SK-N-SH (cell line): ENCODE measurements at regions of chr4 and their contacts with region 1.

Region 1: GRCh38 chr4:108018040-108018883 is 28.6 kb downstream of the HADH start:
- DNase-seq: peak; percentile 72
- H3K4me3 ChIP-seq: no peak overlapping the region; a peak in 1 of 4 replicates
- H3K27ac ChIP-seq: no peak overlapping the region
- H3K4me1 ChIP-seq: no peaks in the 10 kb centered on the region
- H3K27me3 ChIP-seq: no peaks in the 10 kb centered on the region
- CTCF ChIP-seq: peak; percentile 94
- EP300 ChIP-seq: no peak
- RAD21 ChIP-seq: peak; percentile 88

Region 2: GRCh38 chr4:107993969-107994368 is 24.3 kb before region 1 on chr4:
- CTCF ChIA-PET with region 1: interaction called, 20 read pairs
- POLR2A ChIA-PET with region 1: no interaction called
- DNase-seq: no peak
- H3K4me3 ChIP-seq: no peak overlapping the region
- H3K27ac ChIP-seq: no peak overlapping the region
- H3K4me1 ChIP-seq: peaks cover 3 to 4% of the 10 kb centered on the region in 2 experiments; a peak in 3 of 4 replicates
- H3K27me3 ChIP-seq: no peaks in the 10 kb centered on the region
- CTCF ChIP-seq: no peak
- EP300 ChIP-seq: no peak
- RAD21 ChIP-seq: no peak

Region 3: DNA sequence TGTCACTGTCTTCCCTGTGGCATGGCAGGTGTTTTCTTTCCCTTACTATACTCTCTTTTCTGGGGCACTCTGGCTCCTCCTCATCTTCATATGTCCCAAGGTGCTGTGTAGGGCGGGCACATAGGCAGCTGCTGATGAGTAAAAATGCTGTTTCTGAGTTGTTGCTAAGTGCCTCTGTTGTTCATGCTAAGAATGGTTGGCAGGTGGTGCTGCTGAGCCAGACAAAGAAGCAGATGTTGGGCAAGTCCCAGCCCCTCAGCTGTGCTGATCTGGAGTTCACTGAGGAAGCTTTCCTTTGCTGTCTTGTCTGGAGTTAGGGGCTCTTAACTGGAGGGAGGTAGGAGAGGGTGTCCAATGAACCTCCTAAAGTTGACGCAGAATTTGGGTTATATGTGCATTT is 12.1 kb after region 1 on chr4:
- CTCF ChIA-PET with region 1: interaction called, 89 read pairs
- POLR2A ChIA-PET with region 1: no interaction called
- DNase-seq: peak; percentile 40
- H3K4me3 ChIP-seq: no peak overlapping the region
- H3K27ac ChIP-seq: no peak overlapping the region
- H3K4me1 ChIP-seq: peaks cover 0 to 6% of the 10 kb centered on the region in 2 experiments; a peak in 1 of 4 replicates
- H3K27me3 ChIP-seq: no peaks in the 10 kb centered on the region
- CTCF ChIP-seq: peak; percentile 41
- EP300 ChIP-seq: no peak
- RAD21 ChIP-seq: peak; percentile 81

Region 4: GRCh38 chr4:108054025-108054638 is 35.9 kb after region 1 on chr4:
- CTCF ChIA-PET with region 1: interaction called, 30 read pairs
- POLR2A ChIA-PET with region 1: no interaction called
- DNase-seq: no peak
- H3K4me3 ChIP-seq: no peak overlapping the region
- H3K27ac ChIP-seq: no peak overlapping the region
- H3K4me1 ChIP-seq: no peaks in the 10 kb centered on the region; a peak in 1 of 4 replicates
- H3K27me3 ChIP-seq: peaks cover 66% of the 10 kb centered on the region
- CTCF ChIP-seq: no peak
- EP300 ChIP-seq: no peak
- RAD21 ChIP-seq: no peak

Region 5: GRCh38 chr4:108492816-108493595 is 474.7 kb after region 1 on chr4:
- CTCF ChIA-PET with region 1: interaction called, 14 read pairs
- POLR2A ChIA-PET with region 1: no interaction called
- DNase-seq: peak; percentile 19
- H3K4me3 ChIP-seq: no peak overlapping the region; a peak in 1 of 4 replicates
- H3K27ac ChIP-seq: no peak overlapping the region
- H3K4me1 ChIP-seq: no peaks in the 10 kb centered on the region
- H3K27me3 ChIP-seq: no peaks in the 10 kb centered on the region
- CTCF ChIP-seq: peak; percentile 50
- EP300 ChIP-seq: no peak
- RAD21 ChIP-seq: peak; percentile 58

Region 6: GRCh38 chr4:108570993-108571569 is 552.8 kb after region 1 on chr4:
- CTCF ChIA-PET with region 1: interaction called, 95 read pairs
- POLR2A ChIA-PET with region 1: no interaction called
- DNase-seq: no peak
- H3K4me3 ChIP-seq: no peak overlapping the region
- H3K27ac ChIP-seq: no peak overlapping the region
- H3K4me1 ChIP-seq: no peaks in the 10 kb centered on the region
- H3K27me3 ChIP-seq: peaks cover 49% of the 10 kb centered on the region
- CTCF ChIP-seq: no peak
- EP300 ChIP-seq: no peak
- RAD21 ChIP-seq: no peak